ENCODE measurements at regions of chr1 and their contacts with region 1.

Region 1: DNA sequence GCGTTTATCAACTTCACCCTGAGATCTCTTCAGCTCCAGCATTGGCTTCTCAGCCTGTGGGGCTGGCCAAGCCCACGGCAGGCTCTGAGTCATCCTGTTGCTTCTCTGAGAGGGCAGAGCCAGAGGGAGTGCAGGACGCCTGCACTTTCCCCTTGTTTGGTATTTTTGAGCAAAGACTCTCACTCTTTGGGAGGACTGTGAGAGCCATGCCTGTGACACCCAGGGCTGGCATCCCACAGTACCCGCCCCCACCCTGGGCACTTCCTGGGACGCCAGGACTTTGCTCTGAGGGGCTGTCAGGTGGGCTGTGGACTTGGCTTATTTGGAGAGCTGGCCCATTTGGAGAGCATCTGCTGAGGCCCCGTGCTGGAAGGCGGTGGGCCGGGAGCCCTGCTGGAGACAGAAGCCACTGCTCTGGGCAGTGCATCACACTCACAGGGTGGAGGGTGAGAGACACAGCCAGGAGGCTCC is 37.4 kb downstream of the VANGL1 start:
- DNase-seq: peak; percentile 81
- H3K4me3 Mint-ChIP-seq: peak overlapping the region; percentile 44
- H3K27ac Mint-ChIP-seq: peak overlapping the region; percentile 68
- H3K4me1 Mint-ChIP-seq: peaks cover 18% of the 10 kb centered on the region
- H3K27me3 Mint-ChIP-seq: no peaks in the 10 kb centered on the region
- CTCF ChIP-seq: no peak

Region 2: GRCh38 chr1:115642168-115643072 is 36.8 kb before region 1 on chr1:
- CTCF ChIA-PET with region 1: interaction called, 3 read pairs
- POLR2A ChIA-PET with region 1: interaction called, 18 read pairs
- intact Hi-C with region 1: no loop called
- DNase-seq: peak; percentile 52
- H3K4me3 Mint-ChIP-seq: peak overlapping the region; percentile 68
- H3K27ac Mint-ChIP-seq: peak overlapping the region; percentile 59
- H3K4me1 Mint-ChIP-seq: peaks cover 13% of the 10 kb centered on the region
- H3K27me3 Mint-ChIP-seq: peaks cover 13% of the 10 kb centered on the region
- CTCF ChIP-seq: no peak

Region 3: GRCh38 chr1:115946116-115946515 is 266.9 kb after region 1 on chr1:
- CTCF ChIA-PET with region 1: no interaction called
- POLR2A ChIA-PET with region 1: no interaction called
- intact Hi-C with region 1: no loop called
- DNase-seq: no peak
- H3K4me3 Mint-ChIP-seq: no peak overlapping the region
- H3K27ac Mint-ChIP-seq: no peak overlapping the region
- H3K4me1 Mint-ChIP-seq: peaks cover 6% of the 10 kb centered on the region
- H3K27me3 Mint-ChIP-seq: no peaks in the 10 kb centered on the region
- CTCF ChIP-seq: no peak